ENCODE measurements at regions of chr1 and their contacts with region 1.

Region 1: DNA sequence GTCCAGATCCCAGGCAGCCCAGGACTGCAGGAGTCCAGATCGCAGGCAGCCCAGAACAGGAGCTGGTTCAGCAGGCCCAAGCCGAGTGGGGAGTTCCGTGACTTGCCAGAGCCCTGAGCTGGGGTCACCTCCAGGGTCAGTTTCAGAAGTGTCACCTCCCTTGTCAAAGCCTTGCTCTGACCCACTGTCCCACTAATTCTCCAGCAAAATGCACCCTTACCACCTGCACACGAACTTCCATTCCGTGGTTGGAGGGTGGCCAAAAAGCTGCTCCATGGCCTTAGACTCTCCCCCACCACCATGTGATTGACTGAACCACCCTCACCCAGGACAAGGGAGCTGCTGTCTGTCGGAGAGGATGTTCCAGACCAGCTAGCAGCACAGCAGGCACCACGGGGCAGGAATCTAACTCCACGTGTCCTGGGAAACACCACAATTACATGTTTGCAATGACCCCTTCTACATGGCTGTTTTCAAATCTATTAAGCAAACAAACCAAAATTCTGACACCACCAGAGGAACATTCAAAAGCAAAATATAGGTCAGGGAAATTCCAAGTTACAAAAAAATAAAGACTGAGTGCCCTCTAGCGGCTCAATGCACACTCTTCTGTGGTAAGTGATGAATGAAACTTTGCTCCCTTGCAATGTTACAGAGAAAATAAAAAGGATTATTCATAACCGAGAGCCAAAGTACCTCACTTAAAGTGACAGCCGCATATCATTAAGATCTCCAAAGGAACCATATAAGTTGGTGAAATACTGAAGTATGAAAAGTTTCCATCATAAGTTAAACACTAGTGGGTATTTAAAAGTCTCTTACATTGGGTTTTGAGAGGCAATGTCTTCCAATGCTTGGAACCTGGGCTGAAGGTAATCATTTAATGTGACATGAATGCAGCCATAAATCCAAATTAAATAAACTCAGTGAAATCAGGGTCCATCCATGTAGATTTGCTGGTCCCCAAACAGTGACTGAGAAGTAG is 76.3 kb downstream of the NPHP4 start:
- DNase-seq: no peak
- ATAC-seq: peak; percentile 68
- H3K4me3 ChIP-seq: no peak overlapping the region
- H3K27ac ChIP-seq: no peak overlapping the region
- H3K4me1 ChIP-seq: no peaks in the 10 kb centered on the region
- H3K27me3 ChIP-seq: no peaks in the 10 kb centered on the region

Region 2: GRCh38 chr1:4652631-4653327 is 1263.1 kb before region 1 on chr1:
- intact Hi-C with region 1: loop called in 1 of 2 experiments (anchors 5 kb)
- DNase-seq: peak; percentile 55 to 87
- ATAC-seq: peak; percentile 87
- H3K4me3 ChIP-seq: no peak overlapping the region
- H3K27ac ChIP-seq: no peak overlapping the region
- H3K4me1 ChIP-seq: no peaks in the 10 kb centered on the region
- H3K27me3 ChIP-seq: no peaks in the 10 kb centered on the region

Region 3: DNA sequence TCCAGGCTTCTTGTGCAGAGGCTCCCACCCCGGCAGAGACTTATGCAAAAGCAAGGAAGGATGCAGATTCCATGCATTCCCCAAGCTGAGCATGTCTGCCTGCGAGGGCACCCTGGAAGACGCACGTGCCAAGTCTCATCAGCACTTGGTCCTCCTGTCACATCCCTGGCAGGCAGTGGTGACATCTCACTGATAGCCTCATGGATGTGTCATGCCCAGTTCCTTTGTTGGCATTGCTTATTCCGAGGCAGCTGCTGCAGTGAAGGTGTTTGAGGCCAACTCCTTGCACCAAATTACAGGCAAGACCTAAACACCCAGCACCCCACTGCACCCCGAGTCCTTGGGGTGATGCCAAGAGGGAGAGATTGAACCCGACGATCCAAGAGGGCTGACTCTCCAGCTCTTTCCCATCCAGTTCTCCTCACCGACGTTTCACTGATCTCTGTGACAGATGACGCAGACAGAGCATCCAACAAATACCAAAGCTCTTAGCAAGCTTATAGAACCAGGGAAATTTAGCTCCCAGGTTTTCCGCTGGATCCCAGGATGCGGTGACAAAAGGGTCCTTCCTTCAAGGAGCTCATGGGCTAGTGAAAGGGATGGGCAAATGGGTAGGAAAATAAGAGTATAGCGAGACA is 650.3 kb before region 1 on chr1:
- intact Hi-C with region 1: no loop called
- DNase-seq: peak in 1 of 2 donors; percentile 63
- ATAC-seq: no peak
- H3K4me3 ChIP-seq: no peak overlapping the region
- H3K27ac ChIP-seq: no peak overlapping the region
- H3K4me1 ChIP-seq: no peaks in the 10 kb centered on the region
- H3K27me3 ChIP-seq: no peaks in the 10 kb centered on the region